Endothelial cell of umbilical vein (primary cell): ENCODE measurements at regions of chr17 and their contacts with region 1.

Region 1: DNA sequence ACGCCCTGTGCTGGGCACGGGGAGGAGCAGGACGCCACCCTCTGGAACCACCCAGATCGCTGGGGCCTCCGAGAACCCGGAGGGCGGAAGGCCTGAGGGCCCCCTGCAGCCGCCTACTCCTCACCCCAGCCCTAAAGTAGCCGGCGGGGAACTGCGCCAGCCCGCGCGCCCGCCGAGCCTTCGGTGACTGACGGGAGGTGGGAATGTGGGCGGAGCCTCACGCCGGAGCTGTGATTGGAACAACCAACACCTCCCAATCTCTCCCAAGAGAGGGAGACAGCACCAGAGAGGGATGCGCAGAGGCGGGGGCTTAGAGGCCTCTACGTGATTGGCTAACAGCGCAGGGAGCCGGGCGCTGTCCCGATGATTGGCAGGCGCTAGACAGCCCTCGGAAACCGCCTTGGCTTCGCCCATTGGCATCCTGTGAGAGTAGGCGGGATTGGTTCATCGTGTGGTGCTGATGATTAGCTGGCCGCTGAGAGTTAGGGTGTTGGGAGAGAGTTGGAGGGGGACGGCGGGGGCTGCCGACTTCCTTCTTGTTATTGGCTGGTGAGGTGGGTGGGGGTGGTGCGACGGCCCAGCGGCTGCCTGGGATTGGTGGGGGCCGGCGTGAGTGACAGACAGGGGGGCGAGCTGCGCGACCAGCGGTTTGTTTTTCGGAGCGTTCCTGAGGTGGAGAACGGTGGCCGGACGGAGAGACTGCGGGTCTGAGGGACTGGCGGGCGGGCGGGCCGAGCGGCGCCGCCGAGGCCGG is at the start of gene MAP3K3:
- DNase-seq: peak; percentile 100
- H3K4me3 ChIP-seq: peak within 1 kb of the TSS; percentile 78 to 97 (median 80)
- H3K27ac ChIP-seq: peak within 1 kb of the TSS; percentile 53
- H3K4me1 ChIP-seq: peaks cover 27% of the 10 kb centered on the region
- H3K27me3 ChIP-seq: no peaks in the 10 kb centered on the region
- CTCF ChIP-seq: peak in 1 of 2 donors; percentile 24
- POLR2A ChIP-seq: peak; percentile 93
- total RNA-seq, gene MAP3K3: 81.0 and 91.4 TPM in 2 replicates

Region 2: GRCh38 chr17:63542942-63543821 is 78.8 kb before region 1 on chr17:
- CTCF ChIA-PET with region 1: no interaction called
- POLR2A ChIA-PET with region 1: no interaction called
- dilution Hi-C with region 1: no loop called
- intact Hi-C with region 1: no loop called
- DNase-seq: no peak
- H3K4me3 ChIP-seq: no peak overlapping the region
- H3K27ac ChIP-seq: no peak overlapping the region
- H3K4me1 ChIP-seq: no peaks in the 10 kb centered on the region
- H3K27me3 ChIP-seq: peaks cover 12 to 13% of the 10 kb centered on the region in 2 experiments
- CTCF ChIP-seq: no peak
- POLR2A ChIP-seq: no peak

Region 3: GRCh38 chr17:63587770-63588169 is 34.2 kb before region 1 on chr17:
- CTCF ChIA-PET with region 1: no interaction called
- POLR2A ChIA-PET with region 1: no interaction called
- dilution Hi-C with region 1: no loop called
- intact Hi-C with region 1: no loop called
- DNase-seq: no peak
- H3K4me3 ChIP-seq: no peak overlapping the region
- H3K27ac ChIP-seq: no peak overlapping the region
- H3K4me1 ChIP-seq: no peaks in the 10 kb centered on the region
- H3K27me3 ChIP-seq: no peaks in the 10 kb centered on the region
- CTCF ChIP-seq: no peak
- POLR2A ChIP-seq: no peak

Region 4: DNA sequence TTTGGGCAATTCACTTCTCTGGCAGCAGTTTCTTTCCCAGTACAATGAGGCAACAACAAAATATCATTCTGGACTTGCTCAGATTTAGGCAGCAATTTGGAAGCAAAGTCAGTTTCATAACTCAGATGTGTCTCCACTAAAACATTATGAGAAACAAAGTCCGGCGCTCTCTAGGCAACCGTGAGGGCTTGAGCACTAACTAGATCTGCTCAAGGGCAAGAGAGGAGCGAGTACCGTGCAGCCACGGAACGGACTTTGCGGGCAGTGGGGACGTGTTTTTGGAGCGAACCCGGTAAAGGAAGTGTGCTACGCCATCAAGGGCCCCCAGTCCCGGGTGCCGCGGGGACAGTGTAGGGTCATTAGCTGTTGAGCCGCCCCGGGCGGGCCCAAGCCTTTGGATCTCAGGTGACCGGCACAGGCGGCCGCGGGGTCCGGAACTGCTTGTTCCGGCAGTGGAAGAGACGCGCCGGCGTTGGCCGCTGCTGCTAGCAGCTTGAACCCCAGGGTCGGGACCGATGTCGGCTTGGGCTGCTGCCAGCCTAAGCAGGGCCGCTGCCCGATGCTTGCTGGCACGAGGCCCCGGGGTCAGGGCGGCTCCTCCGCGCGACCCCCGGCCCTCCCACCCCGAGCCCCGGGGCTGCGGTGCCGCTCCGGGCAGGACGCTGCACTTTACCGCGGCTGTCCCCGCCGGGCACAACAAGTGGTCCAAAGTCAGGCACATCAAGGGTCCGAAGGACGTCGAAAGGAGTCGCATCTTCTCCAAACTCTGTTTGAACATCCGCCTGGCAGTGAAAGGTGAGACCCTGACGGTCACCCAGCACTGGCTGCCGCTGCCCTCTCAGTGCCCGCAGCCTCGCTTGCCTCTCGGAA is 21.1 kb before region 1 on chr17 and contains the start of gene TACO1:
- CTCF ChIA-PET with region 1: interaction called, 3 read pairs
- POLR2A ChIA-PET with region 1: no interaction called
- dilution Hi-C with region 1: no loop called
- intact Hi-C with region 1: loop called (anchors 2 kb)
- DNase-seq: peak; percentile 77
- H3K4me3 ChIP-seq: peak within 1 kb of the TSS; percentile 73 to 97 (median 81)
- H3K27ac ChIP-seq: peak within 1 kb of the TSS; percentile 33
- H3K4me1 ChIP-seq: peaks cover 25% of the 10 kb centered on the region
- H3K27me3 ChIP-seq: no peaks in the 10 kb centered on the region
- CTCF ChIP-seq: no peak
- POLR2A ChIP-seq: peak; percentile 74
- total RNA-seq, gene TACO1: 26.1 and 31.7 TPM in 2 replicates

Region 5: GRCh38 chr17:63675607-63676413 is 53.9 kb after region 1 on chr17:
- CTCF ChIA-PET with region 1: interaction called, 5 read pairs
- POLR2A ChIA-PET with region 1: interaction called, 10 read pairs
- dilution Hi-C with region 1: no loop called
- intact Hi-C with region 1: loop called (anchors 1 kb)
- DNase-seq: peak; percentile 99
- H3K4me3 ChIP-seq: peak overlapping the region in 2 of 3 experiments; percentile 3 to 61
- H3K27ac ChIP-seq: peak overlapping the region; percentile 91
- H3K4me1 ChIP-seq: peaks cover 51% of the 10 kb centered on the region
- H3K27me3 ChIP-seq: no peaks in the 10 kb centered on the region
- CTCF ChIP-seq: no peak
- POLR2A ChIP-seq: peak; percentile 43

Region 6: DNA sequence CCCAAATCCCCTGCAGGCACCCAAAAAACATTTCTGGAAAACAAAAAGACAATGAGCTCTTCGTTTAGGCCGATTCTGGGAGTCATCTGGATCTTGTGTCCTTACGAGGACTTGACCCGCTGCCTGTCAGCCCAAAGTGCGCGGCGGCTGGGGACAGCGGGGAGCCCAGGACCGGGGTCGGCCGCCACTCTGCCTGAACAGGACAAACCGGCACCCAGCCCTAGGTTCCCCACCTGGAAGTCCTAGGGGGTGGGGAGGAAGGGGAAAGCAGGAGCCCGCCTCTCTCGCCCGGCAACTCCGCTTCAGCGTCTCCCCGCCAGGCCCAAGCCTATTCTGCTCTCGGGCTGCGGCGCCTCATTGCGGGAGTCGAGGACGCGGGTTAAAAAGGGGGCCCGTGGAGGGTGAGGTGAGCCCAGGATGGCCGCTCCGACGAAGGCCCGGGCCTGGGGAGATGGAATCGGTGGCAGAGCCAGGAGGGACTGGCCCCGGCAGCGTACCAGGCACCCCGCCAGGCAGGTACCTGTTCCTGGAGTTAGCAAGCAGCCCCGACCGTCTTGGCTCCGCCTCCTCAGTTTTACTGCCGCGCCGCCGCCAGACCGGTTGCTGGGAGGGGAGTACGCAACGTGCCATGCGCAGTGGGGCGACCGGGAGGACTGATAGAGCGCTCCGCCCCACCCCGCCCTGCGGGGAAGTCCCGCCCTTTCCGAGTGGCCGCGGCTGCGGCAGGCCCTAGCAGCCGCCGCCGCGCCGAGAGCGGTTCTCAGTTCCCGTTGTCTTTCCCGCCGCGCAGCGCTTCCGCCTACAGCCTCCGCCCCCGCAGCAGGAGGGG is 119.5 kb after region 1 on chr17 and contains the start of gene STRADA:
- CTCF ChIA-PET with region 1: no interaction called
- POLR2A ChIA-PET with region 1: no interaction called
- dilution Hi-C with region 1: no loop called
- intact Hi-C with region 1: loop called (anchors 5 kb)
- DNase-seq: peak; percentile 99
- H3K4me3 ChIP-seq: peak within 1 kb of the TSS; percentile 72 to 98 (median 93)
- H3K27ac ChIP-seq: peak within 1 kb of the TSS; percentile 80
- H3K4me1 ChIP-seq: peaks cover 12% of the 10 kb centered on the region
- H3K27me3 ChIP-seq: no peaks in the 10 kb centered on the region
- CTCF ChIP-seq: no peak
- POLR2A ChIP-seq: peak; percentile 88
- total RNA-seq, gene STRADA: 47.0 and 49.6 TPM in 2 replicates